GM18951 (cell line): ENCODE measurements at regions of chr7 and their contacts with region 1.

Region 1: DNA sequence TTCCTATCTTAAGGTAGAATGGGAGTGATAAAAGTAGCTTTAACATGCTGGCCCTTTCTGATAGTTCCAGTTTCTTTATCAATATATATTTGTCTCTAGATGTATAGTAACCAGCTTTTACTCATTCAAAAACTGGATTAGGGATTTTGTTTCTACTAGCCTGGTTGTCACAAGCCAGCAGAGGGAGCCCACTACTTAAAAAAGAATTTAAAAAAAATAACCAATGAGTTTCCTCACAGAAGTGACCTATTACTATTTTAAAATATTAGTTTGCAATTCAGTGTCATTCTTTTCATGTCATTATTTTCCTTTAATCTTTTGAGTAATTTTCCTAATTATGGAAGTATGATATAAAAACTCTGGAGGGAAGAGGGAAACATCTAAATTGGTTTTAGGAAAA is 142.1 kb downstream of the PHTF2 start:
- POLR2A ChIP-seq: no peak

Region 2: DNA sequence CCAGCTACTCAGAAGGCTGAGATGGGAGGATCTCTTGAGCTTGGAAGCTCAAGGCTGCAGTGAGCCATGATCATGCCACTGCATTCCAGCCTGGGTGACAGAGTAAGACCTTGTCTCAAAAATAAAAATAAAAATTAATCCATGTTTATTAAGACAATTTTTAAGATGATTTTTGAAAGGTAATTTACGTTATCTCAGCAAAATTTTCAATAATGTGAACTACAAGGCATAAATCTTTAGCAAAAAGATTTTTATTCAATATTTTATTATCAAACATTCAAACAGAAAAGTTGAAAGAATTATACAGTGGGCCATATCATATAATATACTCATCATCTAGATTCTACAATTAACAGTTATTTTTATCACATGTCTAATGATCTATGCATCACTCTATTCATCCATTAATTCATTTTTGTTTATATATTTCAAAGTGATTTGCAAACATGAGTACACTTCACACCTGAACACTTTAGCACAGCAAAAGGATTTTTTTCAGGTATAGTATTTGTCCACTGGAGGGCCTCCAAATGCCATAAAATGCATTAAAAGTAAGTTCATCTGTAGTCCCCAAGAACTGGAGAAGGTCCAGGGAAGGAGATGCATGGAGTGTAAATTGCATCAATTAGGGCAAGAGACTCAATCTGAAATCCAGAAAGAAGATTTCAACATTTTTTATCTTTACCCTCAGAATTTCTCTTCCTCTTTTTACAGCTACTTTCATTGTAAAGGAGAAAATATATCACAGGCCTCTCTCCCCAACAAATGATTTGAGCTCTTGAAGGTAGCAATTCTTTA is 283.0 kb before region 1 on chr7:
- in situ Hi-C with region 1: loop called (anchors 25 kb)
- POLR2A ChIP-seq: no peak

Region 3: GRCh38 chr7:78443811-78444210 is 503.2 kb after region 1 on chr7:
- in situ Hi-C with region 1: no loop called
- POLR2A ChIP-seq: no peak

Region 4: DNA sequence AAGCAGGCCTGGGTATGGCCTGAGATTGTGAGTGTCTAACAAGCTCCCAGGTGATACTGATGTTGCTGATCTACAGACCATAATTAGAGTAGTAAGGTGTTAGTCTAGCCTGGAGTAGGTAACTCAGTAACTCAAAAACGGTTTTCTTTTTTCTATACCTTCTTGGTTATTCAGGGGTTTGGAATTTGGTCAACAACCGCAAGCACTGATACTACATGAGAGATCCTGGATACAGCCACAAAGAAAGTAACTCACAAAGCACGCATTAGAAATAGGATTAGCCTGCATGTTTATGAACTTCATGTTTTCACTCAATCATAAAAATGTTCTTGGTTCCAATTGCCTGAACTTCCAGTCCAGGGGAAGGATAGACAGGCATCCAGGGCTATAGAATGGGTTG is 709.3 kb after region 1 on chr7:
- in situ Hi-C with region 1: no loop called
- POLR2A ChIP-seq: no peak